Right cardiac atrium (tissue), 5 donors: ENCODE measurements at regions of chr1 and their contacts with region 1.

Region 1: DNA sequence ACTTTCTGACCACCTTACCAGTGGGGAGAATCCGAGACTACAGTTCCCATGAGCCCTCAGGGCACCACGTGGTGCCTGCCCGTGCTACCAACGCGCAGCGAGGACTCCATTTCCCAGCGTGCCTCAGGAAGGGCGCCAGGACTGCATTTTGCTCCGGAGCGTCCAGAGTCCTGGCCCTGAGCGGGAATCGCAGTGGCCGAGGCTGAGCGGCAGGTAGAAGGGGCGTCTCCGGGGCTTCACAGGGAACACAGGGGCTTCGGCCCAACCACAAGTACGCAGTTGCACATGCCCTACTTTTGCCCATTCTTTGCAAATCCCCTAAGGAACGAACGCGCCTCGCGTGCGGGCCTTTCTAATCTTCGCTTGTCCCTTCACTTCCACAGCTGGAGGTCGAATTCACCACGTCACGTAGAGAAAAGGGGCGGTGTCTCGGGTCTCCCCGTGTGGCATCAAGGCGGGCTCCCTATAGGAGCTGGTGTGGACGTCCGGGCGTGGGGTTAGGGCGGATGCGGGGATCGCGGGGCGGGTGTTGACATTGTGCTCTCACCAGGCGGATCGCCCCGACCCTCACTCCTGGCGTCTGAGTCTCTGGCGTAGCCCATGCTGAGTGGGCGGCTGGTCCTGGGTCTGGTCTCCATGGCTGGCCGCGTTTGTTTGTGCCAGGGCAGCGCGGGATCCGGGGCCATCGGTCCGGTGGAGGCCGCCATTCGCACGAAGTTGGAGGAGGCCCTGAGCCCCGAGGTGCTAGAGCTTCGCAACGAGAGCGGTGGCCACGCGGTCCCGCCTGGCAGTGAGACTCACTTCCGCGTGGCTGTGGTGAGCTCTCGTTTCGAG is at the start of gene BOLA1:
- DNase-seq: peak; percentile 95 to 98 (median 97)
- ATAC-seq: peak; percentile 99
- H3K4me3 ChIP-seq: peak within 1 kb of the TSS; percentile 53
- H3K27ac ChIP-seq: peak within 1 kb of the TSS; percentile 87
- H3K4me1 ChIP-seq: peaks cover 6% of the 10 kb centered on the region
- H3K27me3 ChIP-seq: no peaks in the 10 kb centered on the region
- total RNA-seq, gene BOLA1: 13.0 to 23.8 (median 19.4) TPM

Region 2: DNA sequence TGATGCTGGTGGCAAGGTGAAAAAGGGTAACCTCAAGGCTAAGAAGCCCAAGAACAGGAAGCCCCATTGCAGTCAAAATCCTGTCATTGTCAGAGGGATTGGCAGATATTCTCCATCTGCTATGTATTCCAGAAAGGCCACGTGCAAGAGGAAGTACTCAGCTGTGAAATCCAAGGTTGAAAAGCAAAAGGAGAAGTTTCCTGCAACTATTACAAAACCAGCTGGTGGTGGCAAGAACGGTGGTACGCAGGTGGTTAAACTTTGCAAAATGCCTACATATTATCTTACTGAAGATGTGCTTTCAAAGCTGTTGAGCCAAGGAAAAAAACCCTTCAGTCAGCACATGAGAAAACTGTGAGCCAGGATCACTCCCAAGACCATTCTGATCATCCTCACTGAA is 154.2 kb after region 1 on chr1:
- intact Hi-C with region 1: loop called in 1 of 4 experiments (anchors 10 kb)
- DNase-seq: no peak
- ATAC-seq: no peak
- H3K4me3 ChIP-seq: no peak overlapping the region
- H3K27ac ChIP-seq: no peak overlapping the region
- H3K4me1 ChIP-seq: peaks cover 2% of the 10 kb centered on the region
- H3K27me3 ChIP-seq: no peaks in the 10 kb centered on the region